ENCODE measurements at regions of chr17 and their contacts with region 1.

Region 1: GRCh38 chr17:44186307-44187130 is at the start of gene TMUB2:
- DNase-seq: peak; percentile 100
- ATAC-seq: peak; percentile 91
- H3K4me3 Mint-ChIP-seq: peak within 1 kb of the TSS; percentile 97
- H3K27ac Mint-ChIP-seq: peak within 1 kb of the TSS; percentile 100
- H3K4me1 Mint-ChIP-seq: peaks cover 44% of the 10 kb centered on the region
- H3K27me3 Mint-ChIP-seq: no peaks in the 10 kb centered on the region
- total RNA-seq, gene TMUB2: 26.7 to 27.9 TPM

Region 2: GRCh38 chr17:44123356-44124117 is 63.0 kb before region 1 on chr17 and contains the start of gene HDAC5:
- CTCF ChIA-PET with region 1: interaction called, 8 read pairs
- POLR2A ChIA-PET with region 1: interaction called, 11 read pairs
- DNase-seq: peak; percentile 96
- ATAC-seq: peak; percentile 92
- H3K4me3 Mint-ChIP-seq: peak within 1 kb of the TSS; percentile 90
- H3K27ac Mint-ChIP-seq: peak within 1 kb of the TSS; percentile 98
- H3K4me1 Mint-ChIP-seq: peaks cover 16% of the 10 kb centered on the region
- H3K27me3 Mint-ChIP-seq: peaks cover 5% of the 10 kb centered on the region
- total RNA-seq, gene HDAC5: 24.0 to 24.9 TPM

Region 3: GRCh38 chr17:44146375-44147346 is 39.9 kb before region 1 on chr17:
- CTCF ChIA-PET with region 1: interaction called, 14 read pairs
- POLR2A ChIA-PET with region 1: interaction called, 9 read pairs
- DNase-seq: no peak
- ATAC-seq: no peak
- H3K4me3 Mint-ChIP-seq: no peak overlapping the region
- H3K27ac Mint-ChIP-seq: peak overlapping the region; percentile 12
- H3K4me1 Mint-ChIP-seq: peaks cover 28% of the 10 kb centered on the region
- H3K27me3 Mint-ChIP-seq: no peaks in the 10 kb centered on the region

Region 4: DNA sequence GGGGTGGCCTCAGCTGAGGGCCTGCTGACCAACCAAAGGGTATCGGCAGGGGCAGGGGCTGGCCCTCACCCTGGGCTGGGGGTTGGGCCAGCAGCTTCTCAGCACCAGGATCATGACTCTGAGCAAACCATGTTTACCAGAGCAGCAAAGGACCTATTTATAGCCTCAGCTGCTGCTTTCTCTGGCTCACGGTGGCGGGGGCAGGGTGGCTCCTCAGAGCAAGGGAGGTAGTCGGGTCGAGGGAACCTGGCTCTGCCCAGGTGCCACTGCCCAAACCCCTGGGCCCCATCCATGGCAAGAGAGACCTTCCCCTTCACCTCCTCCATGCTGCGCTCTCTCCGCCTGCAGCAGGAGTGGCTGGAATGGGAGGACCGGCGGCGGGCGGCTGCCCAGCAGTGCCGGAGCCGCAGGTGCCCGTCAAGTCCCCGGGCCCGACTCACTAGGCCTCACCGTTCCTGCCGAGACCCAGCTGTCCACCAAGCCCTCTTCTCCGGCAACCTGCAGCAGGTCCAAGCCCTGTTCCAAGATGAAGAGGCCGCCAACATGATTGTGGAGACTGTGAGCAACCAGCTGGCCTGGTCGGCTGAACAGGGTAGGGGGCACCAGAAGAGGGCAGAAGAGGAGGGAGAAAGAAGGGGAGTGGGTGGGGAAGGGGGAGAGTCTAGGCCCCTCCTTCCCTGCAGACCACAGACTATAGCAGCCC is 15.9 kb before region 1 on chr17 and contains the start of gene ASB16:
- CTCF ChIA-PET with region 1: interaction called, 27 read pairs
- POLR2A ChIA-PET with region 1: interaction called, 6 read pairs
- DNase-seq: no peak
- ATAC-seq: no peak
- H3K4me3 Mint-ChIP-seq: no peak within 1 kb of the TSS
- H3K27ac Mint-ChIP-seq: no peak within 1 kb of the TSS
- H3K4me1 Mint-ChIP-seq: peaks cover 7% of the 10 kb centered on the region
- H3K27me3 Mint-ChIP-seq: no peaks in the 10 kb centered on the region
- total RNA-seq, gene ASB16: 0.26 to 0.42 TPM

Region 5: DNA sequence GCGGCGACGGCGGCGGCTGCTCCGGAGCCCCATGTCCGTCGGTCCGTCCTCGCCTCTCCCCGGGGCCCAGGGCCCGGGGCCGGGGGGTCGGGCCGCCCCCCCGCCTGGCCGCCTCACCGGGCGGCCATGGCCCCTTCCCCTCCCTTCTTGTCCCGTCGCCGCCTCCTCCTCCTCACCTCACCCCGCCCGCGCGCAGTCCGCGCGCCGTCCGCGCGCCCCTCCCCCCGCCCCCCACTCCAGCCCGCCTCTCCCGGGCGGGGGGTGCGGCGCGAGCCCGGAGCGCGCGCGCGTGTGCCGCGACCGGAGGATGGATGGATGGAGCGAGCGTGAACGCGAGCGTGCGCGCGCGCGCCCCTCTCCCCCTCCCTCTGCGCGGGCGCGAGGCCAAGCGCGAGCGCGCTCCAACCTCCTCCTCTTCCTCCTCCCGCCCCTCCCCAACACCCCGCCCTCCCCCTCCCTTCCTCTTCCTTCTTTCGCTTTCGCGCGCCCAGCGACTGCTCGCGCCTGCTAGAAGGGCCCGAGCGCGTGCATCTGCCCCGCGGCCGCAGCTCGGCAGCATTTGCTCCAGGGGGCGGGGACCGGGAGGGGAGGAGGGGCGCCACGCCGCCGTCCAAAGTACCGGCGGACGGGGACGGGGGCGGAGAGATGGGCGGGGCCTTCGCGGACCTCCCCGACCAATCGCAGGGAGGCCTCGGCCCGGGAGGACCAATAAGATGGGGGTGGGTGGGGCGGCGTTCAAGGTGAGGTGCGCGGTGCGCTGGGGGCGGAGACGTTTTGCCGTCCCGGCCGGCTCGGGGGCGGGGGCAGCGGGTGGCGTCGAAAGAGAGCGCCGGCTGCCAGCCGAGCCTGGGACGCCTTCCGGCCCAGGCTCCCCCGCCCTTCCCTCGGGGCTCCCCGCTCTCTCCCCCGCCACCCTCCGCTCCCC is 13.3 kb after region 1 on chr17 and contains the start of gene ATXN7L3:
- CTCF ChIA-PET with region 1: interaction called, 15 read pairs
- POLR2A ChIA-PET with region 1: interaction called, 22 read pairs
- DNase-seq: peak; percentile 100
- ATAC-seq: peak; percentile 84
- H3K4me3 Mint-ChIP-seq: peak within 1 kb of the TSS; percentile 88
- H3K27ac Mint-ChIP-seq: peak within 1 kb of the TSS; percentile 95
- H3K4me1 Mint-ChIP-seq: peaks cover 43% of the 10 kb centered on the region
- H3K27me3 Mint-ChIP-seq: no peaks in the 10 kb centered on the region
- total RNA-seq, gene ATXN7L3: 116 to 120 TPM

Region 6: DNA sequence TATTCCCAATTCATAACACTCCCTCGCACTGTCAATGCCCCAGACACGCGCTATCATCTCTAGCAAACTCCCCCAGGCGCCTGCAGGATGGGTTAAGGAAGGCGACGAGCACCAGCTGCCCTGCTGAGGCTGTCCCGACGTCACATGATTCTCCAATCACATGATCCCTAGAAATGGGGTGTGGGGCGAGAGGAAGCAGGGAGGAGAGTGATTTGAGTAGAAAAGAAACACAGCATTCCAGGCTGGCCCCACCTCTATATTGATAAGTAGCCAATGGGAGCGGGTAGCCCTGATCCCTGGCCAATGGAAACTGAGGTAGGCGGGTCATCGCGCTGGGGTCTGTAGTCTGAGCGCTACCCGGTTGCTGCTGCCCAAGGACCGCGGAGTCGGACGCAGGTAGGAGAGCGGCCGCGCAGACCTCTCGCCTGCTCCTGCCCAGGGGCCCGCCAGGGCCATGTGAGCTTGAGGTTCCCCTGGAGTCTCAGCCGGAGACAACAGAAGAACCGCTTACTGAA is 158.5 kb after region 1 on chr17 and contains the start of gene GRN:
- CTCF ChIA-PET with region 1: interaction called, 20 read pairs
- POLR2A ChIA-PET with region 1: interaction called, 5 read pairs
- DNase-seq: peak; percentile 91
- ATAC-seq: peak; percentile 99
- H3K4me3 Mint-ChIP-seq: peak within 1 kb of the TSS; percentile 88
- H3K27ac Mint-ChIP-seq: peak within 1 kb of the TSS; percentile 75
- H3K4me1 Mint-ChIP-seq: peaks cover 30% of the 10 kb centered on the region
- H3K27me3 Mint-ChIP-seq: peaks cover 20% of the 10 kb centered on the region
- total RNA-seq, gene GRN: 45.6 to 46.7 TPM